ENCODE measurements at regions of chr3 and their contacts with region 1.

Region 1: DNA sequence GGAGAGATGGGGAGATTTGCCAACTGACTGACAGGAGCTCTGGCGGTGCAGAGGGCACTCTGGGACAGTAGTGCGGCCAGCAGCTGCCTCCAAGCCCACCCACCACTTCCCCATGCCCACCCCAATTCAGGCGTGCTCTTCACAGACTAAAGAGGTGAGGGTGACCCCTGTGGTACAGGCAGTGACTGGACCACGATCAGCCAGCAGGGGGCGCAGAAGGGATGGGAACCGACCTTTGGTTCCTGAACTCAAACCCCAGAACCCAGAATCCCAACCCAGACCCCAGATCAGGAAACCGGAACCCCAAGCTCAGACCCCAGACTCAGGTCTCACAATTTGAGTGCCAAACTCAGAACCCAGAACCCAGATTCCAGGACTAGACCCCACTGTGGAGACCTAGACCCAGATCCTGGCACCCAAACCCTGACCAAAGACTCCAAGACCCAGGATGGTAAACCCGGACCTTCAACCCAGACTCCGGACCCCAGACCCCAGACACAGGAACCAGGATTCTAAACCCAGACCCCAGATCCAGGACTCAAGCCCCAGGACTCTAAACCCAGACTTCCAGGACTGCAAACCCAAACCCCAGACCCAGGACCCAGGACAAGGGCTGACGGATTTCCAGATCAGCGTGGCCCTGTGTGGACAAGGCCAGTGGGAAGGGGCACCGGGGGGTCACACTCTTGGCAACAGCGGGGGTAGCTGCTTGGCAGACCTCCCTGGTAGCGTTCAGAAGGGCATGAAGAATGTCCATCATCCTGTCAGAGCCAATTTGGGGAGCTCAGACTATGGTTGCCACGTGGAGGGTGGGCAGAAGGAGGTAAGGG is 3.7 kb upstream of the MYL3 start:
- DNase-seq: peak; percentile 61 to 95 (median 84)

Region 2: DNA sequence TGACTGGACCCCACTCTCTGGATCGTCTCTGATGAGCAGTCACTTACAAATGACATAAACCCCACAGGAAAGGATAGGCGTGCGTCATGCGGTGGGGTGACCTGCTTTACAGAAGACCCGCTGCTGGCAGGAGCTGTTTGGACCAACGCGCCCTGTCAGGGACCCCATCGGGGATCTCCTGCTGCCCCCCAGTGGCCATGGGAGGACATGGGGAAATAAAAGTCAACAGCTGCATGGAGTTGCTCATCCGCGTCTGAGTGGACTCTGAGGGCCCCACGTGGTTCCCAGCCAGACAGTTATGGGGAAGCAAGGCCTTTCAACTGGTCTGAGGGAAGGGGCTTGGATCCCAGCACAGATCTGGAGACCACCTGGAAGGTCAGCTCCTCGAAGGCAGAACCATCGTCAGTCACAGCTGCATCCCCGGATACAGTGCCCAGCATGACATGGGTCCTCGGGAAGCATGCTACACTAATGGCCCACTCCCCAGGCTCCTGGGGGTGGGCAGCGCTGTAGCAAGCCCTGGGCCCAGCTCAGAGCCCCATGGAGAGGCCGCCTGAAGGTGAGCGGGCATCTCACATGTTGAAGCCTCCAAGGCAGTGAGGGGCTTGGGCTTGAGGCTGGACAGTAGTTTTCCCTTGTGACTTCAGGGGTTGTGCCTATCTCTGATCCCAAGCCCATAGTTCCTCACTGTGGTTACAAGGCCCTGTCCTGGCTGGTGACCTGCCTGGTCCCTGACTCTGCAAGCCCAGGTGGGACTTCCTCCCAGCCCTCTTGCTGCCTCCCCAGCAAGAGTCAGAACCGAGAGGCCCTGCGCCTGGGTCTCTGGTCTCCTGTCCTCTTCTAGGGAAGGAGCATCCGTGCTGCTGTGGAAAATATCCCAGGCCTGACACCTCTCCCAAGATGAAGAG is 42.9 kb after region 1 on chr3:
- intact Hi-C with region 1: loop called (anchors 2 kb)
- DNase-seq: peak; percentile 77 to 94 (median 88)

Region 3: GRCh38 chr3:47096959-47097358 is 230.0 kb after region 1 on chr3:
- intact Hi-C with region 1: no loop called
- DNase-seq: no peak

Measured in head of caudate nucleus (tissue), 42 donors.